Tibial artery (tissue), 4 donors: ENCODE measurements at regions of chr12 and their contacts with region 1.

Region 1: GRCh38 chr12:119710352-119710964 is 42.5 kb downstream of the PRKAB1 start:
- DNase-seq: no peak
- H3K4me3 ChIP-seq: no peak overlapping the region
- H3K27ac ChIP-seq: no peak overlapping the region
- H3K4me1 ChIP-seq: no peaks in the 10 kb centered on the region
- H3K27me3 ChIP-seq: no peaks in the 10 kb centered on the region
- CTCF ChIP-seq: no peak

Region 2: DNA sequence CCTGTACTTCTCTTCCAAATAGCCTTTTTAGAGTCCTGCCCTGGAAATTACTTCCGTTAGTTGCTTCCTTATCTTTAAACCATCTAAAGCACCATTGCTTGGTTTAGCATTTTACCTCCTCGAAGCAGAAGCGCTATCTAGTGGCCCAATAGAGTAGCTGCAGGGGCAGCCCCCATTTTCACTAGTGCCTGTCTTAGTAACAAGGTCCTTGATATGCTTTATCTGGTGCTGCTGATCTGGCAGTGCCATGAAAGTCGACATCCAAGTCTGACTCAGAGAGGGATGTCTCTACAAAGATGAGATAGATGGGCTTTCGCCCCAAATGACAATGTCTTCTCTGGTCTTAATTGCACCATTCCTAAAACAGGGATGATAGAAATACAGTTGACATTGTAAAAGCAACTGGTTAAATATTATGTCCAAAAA is 191.6 kb after region 1 on chr12:
- intact Hi-C with region 1: loop called (anchors 10 kb)
- DNase-seq: peak in 1 of 2 donors; percentile 30
- H3K4me3 ChIP-seq: no peak overlapping the region
- H3K27ac ChIP-seq: no peak overlapping the region
- H3K4me1 ChIP-seq: no peaks in the 10 kb centered on the region
- H3K27me3 ChIP-seq: peaks cover 0 to 3% of the 10 kb centered on the region in 2 donors
- CTCF ChIP-seq: peak; percentile 42 to 50